Naive thymus-derived CD8-positive, alpha-beta T cell (primary cell): ENCODE measurements at regions of chr19 and their contacts with region 1.

Region 1: DNA sequence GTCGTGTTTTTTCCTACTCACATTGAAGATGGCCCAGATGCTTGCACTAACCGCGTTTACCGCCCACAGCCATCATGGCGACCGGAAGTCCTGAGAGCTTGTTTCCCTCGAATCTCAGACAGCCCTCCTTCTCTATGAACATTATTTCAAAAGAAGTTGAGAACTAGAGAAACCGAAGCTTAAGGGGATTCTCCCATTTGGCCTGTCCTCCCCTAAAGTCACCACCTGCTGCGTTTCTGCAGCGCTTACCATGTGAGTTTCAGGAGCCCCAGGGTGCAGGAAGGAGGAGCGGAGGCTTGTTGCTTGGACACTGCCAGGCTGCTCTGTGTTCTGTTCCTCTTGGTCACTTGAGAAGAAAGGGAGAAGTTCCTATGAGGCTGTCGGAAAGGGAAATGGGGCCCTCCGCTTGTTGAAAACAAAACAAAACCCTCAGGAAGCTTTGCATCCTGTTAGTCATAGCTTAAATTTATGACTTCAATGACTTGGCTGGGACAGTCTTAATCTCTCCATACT is 6.2 kb downstream of the CARD8 start:
- DNase-seq: peak; percentile 48 to 84 (median 70)
- ATAC-seq: peak; percentile 93 to 96
- H3K4me3 Mint-ChIP-seq: peak overlapping the region; percentile 89 to 97 (median 96)
- H3K27ac Mint-ChIP-seq: peak overlapping the region; percentile 96 to 100 (median 98)
- H3K4me1 Mint-ChIP-seq: peaks cover 27 to 86% (median 75%) of the 10 kb centered on the region in 4 donors
- H3K27me3 Mint-ChIP-seq: no peaks in the 10 kb centered on the region

Region 2: GRCh38 chr19:48203732-48204628 is 45.6 kb before region 1 on chr19:
- POLR2A ChIA-PET with region 1: interaction called, 22 read pairs
- DNase-seq: peak; percentile 75 to 93 (median 86)
- ATAC-seq: peak; percentile 98 to 99
- H3K4me3 Mint-ChIP-seq: no peak overlapping the region
- H3K27ac Mint-ChIP-seq: no peak overlapping the region
- H3K4me1 Mint-ChIP-seq: peaks cover 8 to 32% (median 13%) of the 10 kb centered on the region in 4 donors
- H3K27me3 Mint-ChIP-seq: no peaks in the 10 kb centered on the region

Region 3: GRCh38 chr19:48290771-48291488 is 41.4 kb after region 1 on chr19:
- POLR2A ChIA-PET with region 1: no interaction called
- DNase-seq: peak; percentile 17 to 75 (median 61)
- ATAC-seq: peak; percentile 67 to 83
- H3K4me3 Mint-ChIP-seq: peak overlapping the region; percentile 73 to 84 (median 80)
- H3K27ac Mint-ChIP-seq: peak overlapping the region in 2 of 10 donors; percentile 74 to 81
- H3K4me1 Mint-ChIP-seq: peaks cover 0 to 7% (median 7%) of the 10 kb centered on the region in 4 donors
- H3K27me3 Mint-ChIP-seq: peaks cover 0 to 9% (median 1%) of the 10 kb centered on the region in 5 donors

Region 4: DNA sequence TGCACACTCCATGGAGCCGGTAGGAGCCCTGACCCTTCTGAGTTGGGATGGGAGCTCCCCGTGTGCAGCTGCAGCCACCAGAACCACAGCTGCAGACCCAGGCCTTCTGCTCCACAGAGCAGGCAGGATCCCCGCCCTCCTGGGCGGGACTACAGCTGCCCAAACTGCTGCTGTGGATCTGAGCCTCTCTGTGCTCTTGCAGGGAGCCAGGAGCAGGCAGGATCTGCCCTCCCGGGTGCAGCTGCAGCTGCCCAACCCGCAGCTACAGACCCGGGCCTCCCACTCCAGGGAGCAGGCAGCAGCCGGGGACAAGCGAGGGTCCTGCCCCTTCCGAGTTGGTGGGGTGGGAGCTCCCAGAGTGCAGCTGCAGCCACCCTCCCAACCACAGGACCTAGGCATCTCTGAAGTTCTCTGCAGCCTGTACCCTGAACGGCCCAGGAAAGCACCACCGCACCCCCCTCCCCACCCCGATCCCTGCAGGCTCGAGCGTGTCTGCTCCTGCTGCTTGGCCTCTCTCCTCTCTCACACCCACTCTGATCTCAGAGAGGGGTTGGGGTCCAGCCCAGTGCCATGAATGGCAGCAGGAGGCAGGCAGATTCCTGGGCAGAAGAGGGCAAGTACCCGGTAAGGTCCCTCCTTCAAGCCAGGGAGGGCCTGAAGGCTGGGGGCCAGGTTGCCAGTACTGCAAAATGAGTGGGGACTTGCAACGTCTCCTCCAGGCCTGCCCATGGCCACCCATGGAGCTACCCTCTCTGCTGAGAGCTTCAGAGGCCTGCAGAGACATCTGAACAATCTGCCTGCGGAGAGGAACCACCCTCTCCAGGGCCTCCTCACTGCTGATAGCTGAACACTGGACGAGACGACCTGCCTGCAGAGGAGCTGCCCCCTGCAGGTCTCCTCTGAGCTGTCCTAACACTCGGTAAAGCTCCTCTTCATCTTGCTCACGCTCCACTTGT is 59.4 kb after region 1 on chr19:
- POLR2A ChIA-PET with region 1: no interaction called
- DNase-seq: no peak
- ATAC-seq: no peak
- H3K4me3 Mint-ChIP-seq: no peak overlapping the region
- H3K27ac Mint-ChIP-seq: no peak overlapping the region
- H3K4me1 Mint-ChIP-seq: peaks cover 0 to 2% (median under 1%) of the 10 kb centered on the region in 4 donors
- H3K27me3 Mint-ChIP-seq: no peaks in the 10 kb centered on the region